Gastrocnemius medialis (tissue), 4 donors: ENCODE measurements at regions of chr20 and their contacts with region 1.

Region 1: DNA sequence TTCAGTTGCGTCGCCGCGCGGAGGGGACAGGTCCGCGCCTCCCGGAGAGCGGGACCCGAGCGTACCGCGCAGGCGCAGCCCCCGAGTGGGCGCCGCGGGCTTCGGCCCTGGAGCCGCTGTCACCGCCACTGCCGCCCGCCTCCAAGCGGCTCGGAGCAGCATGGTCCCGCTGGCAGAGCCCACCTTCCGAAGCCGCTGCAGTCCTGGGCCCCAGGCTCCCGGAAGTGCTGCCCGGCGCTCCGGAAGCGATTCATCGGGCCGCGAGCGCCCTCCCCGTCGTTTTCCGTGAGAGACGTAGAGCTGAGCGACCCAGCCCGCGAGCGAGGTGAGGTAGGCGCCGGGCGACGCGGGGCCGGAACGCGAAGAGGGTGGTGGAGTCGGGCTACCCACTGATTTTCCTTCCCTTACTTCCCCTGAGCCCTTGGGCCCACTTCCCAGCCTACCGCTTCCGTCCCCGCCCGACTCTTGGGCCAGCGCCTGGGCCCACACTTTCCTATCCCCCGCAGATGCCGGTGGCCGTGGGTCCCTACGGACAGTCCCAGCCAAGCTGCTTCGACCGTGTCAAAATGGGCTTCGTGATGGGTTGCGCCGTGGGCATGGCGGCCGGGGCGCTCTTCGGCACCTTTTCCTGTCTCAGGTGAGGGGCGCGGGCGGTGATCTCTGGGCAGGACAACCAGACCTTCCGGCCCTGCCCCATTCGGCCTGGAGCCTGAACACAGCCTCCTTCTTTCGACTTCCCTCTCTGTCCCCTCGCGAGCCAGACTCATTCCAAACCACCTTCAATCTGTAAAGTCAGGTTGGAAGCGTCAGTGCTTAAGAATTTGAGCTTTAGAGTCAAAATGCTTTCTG is at the starts of genes NFS1 and ROMO1:
- DNase-seq: peak; percentile 69 to 86
- ATAC-seq: peak; percentile 88 to 90
- H3K4me3 ChIP-seq: peak within 1 kb of the TSS; percentile 85 to 95 (median 92)
- H3K27ac ChIP-seq: peak within 1 kb of the TSS; percentile 88 to 97 (median 96)
- H3K4me1 ChIP-seq: peaks cover 28 to 40% of the 10 kb centered on the region in 2 donors
- H3K27me3 ChIP-seq: no peaks in the 10 kb centered on the region
- CTCF ChIP-seq: peak; percentile 5 to 35 (median 25)
- POLR2A ChIP-seq: peak; percentile 60 to 84
- total RNA-seq, gene NFS1: 31.5 to 85.8 (median 37.2) TPM
- total RNA-seq, gene ROMO1: 213 to 491 (median 309) TPM

Region 2: DNA sequence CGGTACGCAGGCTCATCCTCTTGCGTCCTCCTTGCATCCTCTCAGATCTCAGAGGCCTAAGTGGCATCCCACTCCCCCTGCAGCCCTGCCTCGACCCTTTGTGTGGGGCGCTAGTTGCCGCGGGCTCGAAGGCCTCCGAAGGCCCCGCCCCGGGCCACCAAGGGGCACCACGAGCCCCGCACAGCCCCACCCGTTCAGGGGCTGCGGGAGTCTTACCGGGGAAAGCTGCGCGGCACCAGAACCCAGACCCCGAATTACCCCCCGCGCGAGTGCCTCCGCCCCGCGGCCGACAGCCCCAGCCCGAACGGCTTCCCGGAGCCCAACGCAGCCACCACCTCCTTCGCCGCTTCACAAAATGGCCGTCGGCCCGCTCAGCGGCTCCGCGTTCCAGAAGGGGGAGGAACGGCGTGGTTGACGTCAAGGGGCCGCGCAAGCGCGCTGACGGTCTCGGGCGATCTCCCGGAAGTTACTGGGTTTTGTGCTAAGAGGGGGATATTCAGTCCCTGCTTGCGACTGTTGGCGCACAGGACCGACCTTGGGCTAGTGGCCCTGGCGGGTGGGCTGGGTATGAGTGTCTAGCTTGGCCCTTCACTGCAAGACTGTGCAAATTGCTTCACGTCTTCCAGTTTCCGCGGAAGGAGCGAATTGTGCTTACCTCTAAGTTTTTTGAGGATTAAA is 34.7 kb before region 1 on chr20 and contains the starts of genes CPNE1 and RBM12:
- in situ Hi-C with region 1: no loop called
- intact Hi-C with region 1: loop called (anchors 1 kb)
- DNase-seq: peak; percentile 87 to 90
- ATAC-seq: peak; percentile 93 to 95
- H3K4me3 ChIP-seq: peak within 1 kb of the TSS; percentile 73 to 97 (median 74)
- H3K27ac ChIP-seq: peak within 1 kb of the TSS; percentile 93 to 98 (median 98)
- H3K4me1 ChIP-seq: peaks cover 35 to 41% of the 10 kb centered on the region in 2 donors
- H3K27me3 ChIP-seq: no peaks in the 10 kb centered on the region
- CTCF ChIP-seq: no peak
- POLR2A ChIP-seq: peak; percentile 91 to 92
- total RNA-seq, gene CPNE1: 37.3 to 60.7 (median 50.1) TPM
- total RNA-seq, gene RBM12: 9.8 to 23.7 (median 20.7) TPM